Caco-2 (cell line): ENCODE measurements at regions of chr7 and their contacts with region 1.

Region 1: DNA sequence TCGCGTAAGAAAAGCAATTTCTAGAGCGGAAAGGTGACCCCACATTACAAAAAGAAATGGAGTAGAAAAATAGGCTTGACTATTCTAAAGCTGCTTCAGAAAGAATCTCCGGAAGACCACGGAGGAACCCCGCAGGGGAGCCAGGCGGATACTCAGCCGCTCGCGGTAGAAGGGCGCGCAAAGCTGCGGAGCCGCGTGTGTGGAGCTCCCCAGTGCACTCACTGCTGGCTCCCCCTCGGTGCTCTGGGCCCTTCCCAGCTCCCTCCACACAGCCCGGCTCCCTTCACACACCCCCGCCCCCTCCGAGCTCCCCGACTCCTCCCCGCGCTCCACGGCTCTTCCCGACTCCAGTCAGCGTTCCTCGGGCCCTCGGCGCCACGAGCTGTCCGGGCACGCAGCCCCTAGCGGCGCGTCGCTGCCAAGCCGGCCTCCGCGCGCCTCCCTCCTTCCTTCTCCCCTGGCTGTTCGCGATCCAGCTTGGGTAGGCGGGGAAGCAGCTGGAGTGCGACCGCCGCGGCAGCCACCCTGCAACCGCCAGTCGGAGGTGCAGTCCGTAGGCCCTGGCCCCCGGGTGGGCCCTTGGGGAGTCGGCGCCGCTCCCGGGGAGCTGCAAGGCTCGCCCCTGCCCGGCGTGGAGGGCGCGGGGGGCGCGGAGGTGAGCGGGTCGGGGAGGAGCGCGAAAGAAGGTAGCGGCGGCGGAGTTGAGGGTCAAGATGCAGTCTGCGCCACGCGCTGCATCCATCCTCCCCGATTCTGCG is at the start of gene STEAP2:
- DNase-seq: peak; percentile 93 to 94
- H3K4me3 ChIP-seq: peak within 1 kb of the TSS; percentile 67
- H3K4me3 Mint-ChIP-seq: no peak within 1 kb of the TSS
- H3K27ac Mint-ChIP-seq: peak within 1 kb of the TSS; percentile 85
- H3K4me1 ChIP-seq: 0 out of 2 replicates have a peak, but pooled peaks cover 8% of the 10 kb centered on the region
- H3K4me1 Mint-ChIP-seq: no peaks in the 10 kb centered on the region
- H3K27me3 ChIP-seq: no peaks in the 10 kb centered on the region
- H3K27me3 Mint-ChIP-seq: no peaks in the 10 kb centered on the region
- CTCF ChIP-seq: peak; percentile 71 to 80
- total RNA-seq, gene STEAP2: 12.7 and 13.5 TPM in 2 replicates

Region 2: DNA sequence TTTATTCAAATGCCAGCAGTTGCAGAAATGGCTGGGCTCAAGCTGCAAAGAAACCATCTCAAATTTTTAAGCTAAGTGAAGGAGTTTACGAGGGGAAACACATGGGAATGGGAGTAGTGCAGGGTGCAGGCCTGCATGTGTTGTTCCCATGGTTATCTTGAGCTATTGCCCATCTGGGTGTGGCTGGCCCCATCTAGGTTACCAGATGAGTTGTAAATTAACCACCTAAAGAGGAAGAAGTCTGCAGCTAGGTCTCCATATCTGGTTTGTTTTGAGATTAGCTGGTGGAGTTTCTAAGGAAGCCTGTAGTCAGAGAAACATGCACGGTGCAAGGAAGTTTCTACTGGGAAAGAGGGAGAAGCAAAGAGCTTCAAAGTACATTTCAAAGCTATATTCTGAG is 23.3 kb before region 1 on chr7:
- CTCF ChIA-PET with region 1: interaction called, 5 read pairs
- POLR2A ChIA-PET with region 1: no interaction called
- intact Hi-C with region 1: loop called (anchors 1 kb)
- DNase-seq: peak; percentile 33 to 57
- H3K4me3 ChIP-seq: no peak overlapping the region
- H3K4me3 Mint-ChIP-seq: no peak overlapping the region
- H3K27ac Mint-ChIP-seq: peak overlapping the region; percentile 46
- H3K4me1 ChIP-seq: no peaks in the 10 kb centered on the region
- H3K4me1 Mint-ChIP-seq: peaks cover 19% of the 10 kb centered on the region
- H3K27me3 ChIP-seq: no peaks in the 10 kb centered on the region
- H3K27me3 Mint-ChIP-seq: no peaks in the 10 kb centered on the region
- CTCF ChIP-seq: no peak

Region 3: DNA sequence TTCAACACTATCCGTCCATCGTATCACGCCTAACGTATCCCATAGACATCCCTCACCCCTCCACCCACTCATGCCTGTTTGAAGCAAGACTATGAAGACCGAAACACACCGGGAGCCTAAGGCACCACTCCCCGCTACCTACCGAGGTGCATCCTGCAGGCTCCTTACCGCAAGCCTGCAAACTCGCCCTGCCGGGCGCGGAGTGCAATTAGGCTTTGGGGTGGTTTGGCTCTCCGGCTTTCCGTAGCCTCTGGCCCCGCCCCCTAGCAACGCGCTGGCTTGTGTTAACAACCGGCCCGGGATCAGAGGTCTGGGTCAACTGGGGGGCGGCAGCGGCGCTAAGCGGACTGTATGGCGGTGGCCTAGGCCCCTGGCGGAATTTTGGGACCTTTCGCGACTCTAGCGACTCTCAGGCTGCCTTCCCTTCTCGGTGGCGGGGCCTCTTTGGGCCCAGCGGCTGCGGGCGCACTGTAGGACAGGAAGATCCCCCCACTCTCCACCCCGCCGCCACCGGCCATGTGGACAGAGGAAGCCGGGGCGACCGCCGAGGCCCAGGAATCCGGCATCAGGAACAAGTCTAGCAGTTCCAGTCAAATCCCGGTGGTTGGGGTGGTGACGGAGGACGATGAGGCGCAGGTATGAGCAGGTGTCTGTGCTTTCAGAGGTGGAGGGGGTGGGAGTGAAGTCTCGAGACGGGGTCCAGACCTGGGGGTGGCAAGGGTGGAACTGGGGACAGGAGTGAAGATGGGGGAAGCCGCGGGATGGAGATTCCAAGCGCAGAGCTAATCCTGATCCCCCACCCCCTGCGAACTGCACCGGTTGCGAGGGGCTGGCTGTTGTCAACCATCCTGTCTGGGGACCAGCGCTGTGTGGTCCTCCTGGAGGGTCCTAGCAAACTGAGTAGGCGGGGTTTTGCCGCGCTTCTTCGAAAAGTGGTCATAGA is 33.6 kb after region 1 on chr7 and contains the start of gene CFAP69:
- CTCF ChIA-PET with region 1: interaction called, 6 read pairs
- POLR2A ChIA-PET with region 1: interaction called, 5 read pairs
- intact Hi-C with region 1: loop called (anchors 1 kb)
- DNase-seq: peak; percentile 92 to 95
- H3K4me3 ChIP-seq: peak within 1 kb of the TSS; percentile 57
- H3K4me3 Mint-ChIP-seq: peak within 1 kb of the TSS; percentile 87
- H3K27ac Mint-ChIP-seq: peak within 1 kb of the TSS; percentile 91
- H3K4me1 ChIP-seq: peaks cover 40% of the 10 kb centered on the region
- H3K4me1 Mint-ChIP-seq: peaks cover 12% of the 10 kb centered on the region
- H3K27me3 ChIP-seq: no peaks in the 10 kb centered on the region
- H3K27me3 Mint-ChIP-seq: no peaks in the 10 kb centered on the region
- CTCF ChIP-seq: peak; percentile 21 to 26
- total RNA-seq, gene CFAP69: 4.8 and 7.4 TPM in 2 replicates

Region 4: GRCh38 chr7:90262438-90262837 is 50.9 kb after region 1 on chr7:
- CTCF ChIA-PET with region 1: interaction called, 3 read pairs
- POLR2A ChIA-PET with region 1: no interaction called
- intact Hi-C with region 1: loop called (anchors 2 kb)
- DNase-seq: peak in 1 of 2 experiments; percentile 24
- H3K4me3 ChIP-seq: no peak overlapping the region
- H3K4me3 Mint-ChIP-seq: no peak overlapping the region
- H3K27ac Mint-ChIP-seq: no peak overlapping the region
- H3K4me1 ChIP-seq: peaks cover 9% of the 10 kb centered on the region
- H3K4me1 Mint-ChIP-seq: no peaks in the 10 kb centered on the region
- H3K27me3 ChIP-seq: no peaks in the 10 kb centered on the region
- H3K27me3 Mint-ChIP-seq: no peaks in the 10 kb centered on the region
- CTCF ChIP-seq: peak; percentile 45 to 48

Region 5: DNA sequence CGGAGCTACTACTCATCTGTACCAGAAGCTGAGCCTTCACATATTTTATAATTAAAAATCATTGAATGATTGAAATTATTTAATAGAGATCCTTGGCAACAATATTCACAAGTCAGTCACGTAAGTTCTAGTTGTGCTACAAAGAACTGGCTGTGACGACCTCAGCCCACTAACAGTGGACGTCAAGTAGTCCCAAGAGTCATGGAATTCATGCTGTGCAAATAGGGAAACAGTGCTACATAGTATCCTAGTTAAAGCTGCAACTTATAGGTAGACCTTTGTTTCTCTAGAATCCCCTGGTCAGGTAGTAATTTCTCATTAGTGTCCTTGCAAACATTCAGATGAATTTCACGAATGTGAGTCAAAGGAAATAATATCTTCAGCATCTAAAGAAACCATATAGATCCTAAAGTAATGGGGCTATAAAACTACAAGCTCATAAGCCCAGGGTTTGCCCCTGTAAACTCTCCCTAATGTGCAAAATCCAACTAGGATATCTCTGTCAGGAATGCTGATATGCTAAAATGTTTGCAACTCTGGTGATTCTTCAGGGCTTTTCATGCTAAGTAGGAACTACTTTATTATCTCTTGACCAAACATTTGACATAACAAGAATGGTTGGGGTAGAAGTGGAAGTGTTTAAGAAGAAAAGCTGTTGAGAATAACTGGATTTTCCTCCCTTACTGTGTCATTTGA is 64.6 kb after region 1 on chr7:
- CTCF ChIA-PET with region 1: interaction called, 13 read pairs
- POLR2A ChIA-PET with region 1: interaction called, 6 read pairs
- intact Hi-C with region 1: no loop called
- DNase-seq: peak; percentile 72 to 75
- H3K4me3 ChIP-seq: no peak overlapping the region
- H3K4me3 Mint-ChIP-seq: peak overlapping the region; percentile 56
- H3K27ac Mint-ChIP-seq: peak overlapping the region; percentile 87
- H3K4me1 ChIP-seq: peaks cover 76% of the 10 kb centered on the region
- H3K4me1 Mint-ChIP-seq: peaks cover 11% of the 10 kb centered on the region
- H3K27me3 ChIP-seq: no peaks in the 10 kb centered on the region
- H3K27me3 Mint-ChIP-seq: no peaks in the 10 kb centered on the region
- CTCF ChIP-seq: no peak

Region 6: DNA sequence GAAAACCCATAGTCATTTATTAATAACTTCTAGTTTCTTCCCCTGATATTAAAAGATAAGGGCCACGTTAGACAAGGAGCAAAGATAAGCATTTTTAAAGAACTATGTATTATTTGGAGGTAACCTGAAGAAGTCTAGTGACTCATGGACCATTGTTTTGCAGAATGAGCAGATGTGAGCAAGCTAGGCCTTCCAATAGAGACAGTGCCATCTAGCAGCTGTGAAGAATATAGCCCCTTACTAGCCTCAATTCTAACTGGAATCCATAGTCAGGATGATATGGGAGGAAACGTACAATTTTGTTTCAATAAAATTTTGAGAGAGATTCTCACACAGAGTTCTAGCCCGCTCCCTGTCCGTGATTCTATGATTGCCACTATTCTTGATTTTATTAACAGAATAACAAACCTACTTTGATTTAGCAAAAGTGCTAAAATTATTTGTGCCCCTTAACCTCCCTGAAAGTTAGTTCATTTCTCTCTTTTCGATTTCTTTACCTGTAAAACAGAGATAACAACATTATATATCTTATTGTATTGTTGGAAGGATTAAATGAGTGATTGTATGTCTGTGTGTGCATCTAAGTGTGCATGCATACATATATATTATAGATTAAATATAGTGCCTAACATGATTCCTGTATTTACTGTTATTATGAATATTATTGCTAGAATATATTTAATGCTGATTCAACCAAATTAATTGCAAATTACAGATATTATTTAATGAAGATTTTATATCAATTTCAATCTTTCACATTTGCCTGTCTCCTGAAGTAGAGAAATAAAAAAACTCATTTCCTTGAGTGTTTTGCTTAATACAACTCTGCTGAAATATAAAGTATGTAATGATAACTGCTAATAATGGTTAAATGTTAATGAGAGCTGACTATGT is 86.8 kb after region 1 on chr7:
- CTCF ChIA-PET with region 1: interaction called, 3 read pairs
- POLR2A ChIA-PET with region 1: no interaction called
- intact Hi-C with region 1: loop called (anchors 1 kb)
- DNase-seq: peak; percentile 41 to 52
- H3K4me3 ChIP-seq: no peak overlapping the region
- H3K4me3 Mint-ChIP-seq: no peak overlapping the region
- H3K27ac Mint-ChIP-seq: no peak overlapping the region
- H3K4me1 ChIP-seq: peaks cover 18% of the 10 kb centered on the region
- H3K4me1 Mint-ChIP-seq: peaks cover 15% of the 10 kb centered on the region
- H3K27me3 ChIP-seq: no peaks in the 10 kb centered on the region
- H3K27me3 Mint-ChIP-seq: no peaks in the 10 kb centered on the region
- CTCF ChIP-seq: peak; percentile 67 to 84